ENCODE measurements at regions of chr1 and their contacts with region 1.

Region 1: DNA sequence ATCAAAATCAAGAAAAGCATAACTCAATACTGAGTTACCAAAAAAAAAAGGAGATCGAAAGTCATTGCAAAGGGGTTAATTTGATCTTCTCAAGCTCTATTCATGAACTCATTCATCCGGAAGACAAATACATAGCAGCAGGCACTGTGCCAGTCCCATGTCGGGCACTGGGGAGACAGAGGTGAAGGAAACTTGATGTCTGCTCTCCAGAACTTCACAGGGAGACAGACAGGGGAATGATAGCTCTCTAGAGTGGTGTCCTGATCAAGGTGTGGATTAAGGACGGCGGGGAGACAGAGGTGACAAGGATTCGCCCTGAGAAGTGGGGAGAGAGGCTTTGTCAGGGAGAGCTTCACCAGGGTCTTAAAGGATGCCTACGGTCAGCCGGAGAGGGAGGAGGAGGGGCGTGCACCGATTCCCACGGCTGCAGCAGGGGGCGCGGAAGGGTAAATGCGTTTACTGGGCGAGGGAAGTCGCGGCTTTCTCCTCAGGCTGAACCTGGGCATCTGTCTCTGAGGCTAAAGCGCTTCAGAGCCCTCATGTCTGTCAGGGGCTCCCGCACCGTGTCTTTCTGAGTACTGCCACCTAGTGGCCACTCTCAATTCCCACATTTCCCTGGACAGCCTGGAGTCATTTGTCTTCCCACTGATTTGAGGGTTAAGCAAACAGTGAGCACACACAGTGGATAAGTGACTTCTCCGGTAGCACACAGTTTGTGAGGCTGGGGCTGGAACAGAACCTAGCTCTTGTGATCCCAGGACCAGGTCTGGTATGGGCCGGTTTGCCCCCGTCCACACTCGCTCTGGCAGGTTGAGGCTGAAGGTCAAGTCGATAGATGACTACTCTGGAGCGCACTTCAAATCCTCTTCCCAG is 152.8 kb downstream of the TENT5C start:
- DNase-seq: peak; percentile 90
- ATAC-seq: peak; percentile 93
- H3K4me3 Mint-ChIP-seq: peak overlapping the region; percentile 59
- H3K27ac Mint-ChIP-seq: peak overlapping the region; percentile 33
- H3K4me1 Mint-ChIP-seq: peaks cover 28% of the 10 kb centered on the region
- H3K27me3 Mint-ChIP-seq: peaks cover 2% of the 10 kb centered on the region; the same call in 1 of the 2 replicates
- CTCF ChIP-seq: peak; percentile 76

Region 2: DNA sequence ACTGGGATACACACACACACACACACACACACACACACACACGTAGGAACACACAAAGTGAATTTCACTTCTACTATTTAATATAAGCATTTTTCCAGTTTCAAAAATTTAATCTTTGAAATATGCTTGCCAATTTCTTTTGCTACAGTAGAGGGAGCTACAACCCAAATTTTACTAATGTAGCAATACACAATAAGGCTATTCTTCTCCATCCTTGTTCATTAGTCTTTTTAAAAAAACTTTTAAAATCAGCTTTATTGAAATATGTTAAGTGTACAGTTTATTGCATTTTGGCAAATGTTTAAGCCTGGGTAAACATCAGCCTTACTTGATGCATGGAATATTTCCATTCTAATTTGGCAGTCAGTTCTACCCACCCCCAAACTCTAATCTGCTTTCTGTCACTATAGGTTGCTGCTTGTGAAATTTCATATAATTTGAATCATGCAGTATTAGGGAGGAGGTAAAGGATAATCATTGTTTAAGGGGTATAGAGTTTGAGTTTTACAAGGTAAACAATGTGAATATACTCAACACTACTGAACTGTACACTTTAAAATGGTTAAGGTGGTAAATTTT is 245.8 kb before region 1 on chr1:
- CTCF ChIA-PET with region 1: interaction called, 11 read pairs
- POLR2A ChIA-PET with region 1: no interaction called
- DNase-seq: no peak
- ATAC-seq: no peak
- H3K4me3 Mint-ChIP-seq: no peak overlapping the region
- H3K27ac Mint-ChIP-seq: no peak overlapping the region
- H3K4me1 Mint-ChIP-seq: peaks cover 4% of the 10 kb centered on the region
- H3K27me3 Mint-ChIP-seq: no peaks in the 10 kb centered on the region
- CTCF ChIP-seq: peak; percentile 59

Region 3: DNA sequence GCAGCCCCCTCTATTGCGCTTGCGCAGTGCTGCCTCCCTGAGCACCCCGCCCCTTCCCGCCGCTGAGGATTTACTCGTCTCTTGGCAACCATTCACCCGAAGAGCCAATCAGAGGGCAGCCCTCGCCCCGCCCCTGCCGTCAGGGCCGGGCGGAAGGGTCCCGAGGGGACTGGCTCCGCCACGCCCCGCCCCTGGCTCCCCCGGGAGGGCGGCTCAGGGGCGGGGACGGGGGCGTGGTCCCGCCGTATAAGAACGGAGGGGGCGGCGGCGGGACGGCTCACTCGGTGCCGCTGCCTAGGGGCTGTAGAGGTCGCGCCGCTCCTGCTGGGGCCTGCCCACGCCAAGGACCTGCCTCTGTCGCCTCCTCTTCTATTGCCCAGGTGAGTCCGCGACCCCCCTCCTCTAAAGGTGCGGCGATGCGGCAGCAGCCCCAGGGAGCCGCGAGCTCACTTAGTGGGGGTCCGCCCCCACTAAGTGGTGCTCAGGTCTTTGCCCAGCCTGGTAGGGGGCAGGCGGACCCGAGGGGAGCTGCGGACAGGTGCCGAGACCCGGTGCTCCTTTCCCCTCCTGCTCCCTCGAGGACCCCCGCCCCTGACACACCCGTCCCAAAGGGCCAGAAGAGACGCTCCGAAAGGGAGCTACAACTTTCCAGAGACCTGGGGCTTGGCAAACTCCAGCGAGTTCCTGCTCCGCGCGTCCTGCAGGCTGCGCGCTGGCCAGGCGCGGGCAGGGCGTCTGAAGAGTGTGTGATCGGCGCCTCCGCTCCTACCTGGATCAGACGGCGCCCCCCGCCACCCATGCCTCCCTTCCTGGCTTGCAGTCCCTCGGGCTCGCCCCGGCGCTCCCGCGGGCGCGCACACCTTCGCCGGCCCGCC is 152.7 kb before region 1 on chr1 and contains the start of gene TENT5C:
- CTCF ChIA-PET with region 1: interaction called, 11 read pairs
- POLR2A ChIA-PET with region 1: no interaction called
- DNase-seq: peak; percentile 98
- ATAC-seq: peak; percentile 92
- H3K4me3 Mint-ChIP-seq: peak within 1 kb of the TSS; percentile 97
- H3K27ac Mint-ChIP-seq: peak within 1 kb of the TSS; percentile 86
- H3K4me1 Mint-ChIP-seq: peaks cover 29% of the 10 kb centered on the region
- H3K27me3 Mint-ChIP-seq: peaks cover 72% of the 10 kb centered on the region
- CTCF ChIP-seq: no peak
- total RNA-seq, gene TENT5C: 1.1 to 1.4 TPM (median 1.1 TPM) in 3 replicates

Region 4: DNA sequence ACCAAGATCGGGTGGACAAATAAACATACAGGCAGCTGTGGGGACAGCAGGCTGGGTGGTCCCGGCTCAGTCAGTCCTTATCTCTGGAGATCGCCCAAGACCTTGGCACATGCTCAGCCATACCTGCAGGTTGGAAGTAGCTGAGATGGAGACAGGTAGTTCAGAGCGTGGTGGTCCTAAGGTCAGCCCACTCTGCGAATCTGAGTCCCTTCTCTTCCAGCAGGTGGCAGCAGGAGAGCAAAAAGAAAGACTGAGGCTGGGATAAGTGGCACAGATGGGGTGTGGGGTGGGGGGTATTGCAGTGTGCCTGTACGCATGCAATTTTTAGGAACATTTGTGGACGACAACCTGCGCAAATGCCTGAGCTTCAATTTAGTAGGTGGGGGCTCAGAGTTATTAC is 48.0 kb before region 1 on chr1:
- CTCF ChIA-PET with region 1: interaction called, 36 read pairs
- POLR2A ChIA-PET with region 1: no interaction called
- DNase-seq: peak; percentile 48
- ATAC-seq: peak; percentile 55
- H3K4me3 Mint-ChIP-seq: no peak overlapping the region
- H3K27ac Mint-ChIP-seq: no peak overlapping the region
- H3K4me1 Mint-ChIP-seq: peaks cover 27% of the 10 kb centered on the region
- H3K27me3 Mint-ChIP-seq: peaks cover 7% of the 10 kb centered on the region
- CTCF ChIP-seq: peak; percentile 33; the same call in 1 of the 2 replicates

Region 5: GRCh38 chr1:117740496-117740895 is 18.2 kb before region 1 on chr1:
- CTCF ChIA-PET with region 1: interaction called, 12 read pairs
- POLR2A ChIA-PET with region 1: no interaction called
- DNase-seq: no peak
- ATAC-seq: peak; percentile 55; the same call in 1 of the 2 replicates
- H3K4me3 Mint-ChIP-seq: no peak overlapping the region
- H3K27ac Mint-ChIP-seq: no peak overlapping the region
- H3K4me1 Mint-ChIP-seq: peaks cover 8% of the 10 kb centered on the region
- H3K27me3 Mint-ChIP-seq: no peaks in the 10 kb centered on the region
- CTCF ChIP-seq: no peak

Region 6: DNA sequence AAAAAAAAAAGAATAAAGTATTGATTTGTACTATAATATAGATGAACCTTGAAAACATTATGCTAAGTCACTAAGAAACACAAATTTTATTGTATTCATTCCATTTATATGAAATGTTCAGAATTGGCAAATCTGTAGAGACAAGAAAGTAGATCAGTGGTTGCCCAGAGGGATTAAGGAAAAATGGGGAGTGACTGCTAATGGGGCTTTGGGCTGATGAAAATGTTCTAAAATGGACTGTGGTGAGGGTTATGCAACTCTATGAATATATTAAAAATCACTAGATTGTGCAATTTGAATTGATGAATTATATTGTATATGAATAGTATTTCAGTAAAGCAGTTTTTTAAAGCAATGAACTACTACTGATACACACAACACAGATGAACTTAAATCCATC is 160.7 kb after region 1 on chr1:
- CTCF ChIA-PET with region 1: no interaction called
- POLR2A ChIA-PET with region 1: no interaction called
- DNase-seq: no peak
- ATAC-seq: no peak
- H3K4me3 Mint-ChIP-seq: no peak overlapping the region
- H3K27ac Mint-ChIP-seq: no peak overlapping the region
- H3K4me1 Mint-ChIP-seq: no peaks in the 10 kb centered on the region
- H3K27me3 Mint-ChIP-seq: no peaks in the 10 kb centered on the region
- CTCF ChIP-seq: no peak

Region 7: DNA sequence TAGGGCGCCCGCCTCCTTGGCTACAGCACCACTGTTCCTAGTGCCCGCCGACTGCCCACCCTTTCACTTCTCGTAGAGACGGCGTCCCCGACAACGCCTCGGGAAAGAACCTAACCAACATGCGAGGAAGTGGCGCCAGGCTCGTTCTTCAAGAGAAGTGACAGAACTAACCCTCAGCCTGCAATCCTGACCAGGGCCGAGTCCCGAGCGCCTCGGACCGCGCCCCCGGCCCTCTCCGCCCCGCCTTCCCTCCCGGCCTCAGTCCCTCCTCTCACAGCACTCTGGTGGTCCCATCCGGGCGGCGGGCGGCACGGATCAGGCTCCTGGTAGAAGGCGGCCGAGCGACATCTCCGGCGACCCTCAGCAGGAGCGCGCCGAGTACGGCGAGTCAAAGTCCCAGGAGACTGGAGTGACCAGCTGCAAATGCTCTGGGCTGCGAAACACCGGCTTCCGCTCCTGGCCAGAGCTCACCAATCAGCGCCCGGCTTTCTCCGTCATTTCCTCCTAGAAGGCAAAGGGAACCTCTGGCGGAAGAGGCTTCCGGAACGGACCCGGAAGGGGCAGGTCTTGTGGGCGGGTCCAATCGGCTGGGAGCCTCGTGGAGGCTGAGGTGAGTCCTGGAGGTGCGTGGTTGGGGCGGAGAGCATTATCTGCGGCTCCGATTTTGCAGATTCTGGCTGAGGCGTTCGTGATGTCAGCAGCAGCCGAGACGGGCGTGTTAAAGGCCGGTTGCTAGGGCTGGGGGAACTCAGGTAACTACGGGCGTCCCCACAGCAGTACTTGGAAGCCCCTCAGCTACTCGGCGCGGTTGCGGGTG is 170.7 kb after region 1 on chr1 and contains the starts of genes GDAP2 and WDR3:
- CTCF ChIA-PET with region 1: no interaction called
- POLR2A ChIA-PET with region 1: no interaction called
- DNase-seq: peak; percentile 95
- ATAC-seq: peak; percentile 91
- H3K4me3 Mint-ChIP-seq: peak within 1 kb of the TSS; percentile 98
- H3K27ac Mint-ChIP-seq: peak within 1 kb of the TSS; percentile 77
- H3K4me1 Mint-ChIP-seq: peaks cover 37% of the 10 kb centered on the region
- H3K27me3 Mint-ChIP-seq: no peaks in the 10 kb centered on the region
- CTCF ChIP-seq: no peak
- total RNA-seq, gene GDAP2: 21.1 to 24.1 TPM (median 22.4 TPM) in 3 replicates
- total RNA-seq, gene WDR3: 38.8 to 50.0 TPM (median 42.9 TPM) in 3 replicates